GM12878 (cell line): ENCODE measurements at regions of chr2 and their contacts with region 1.

Region 1: DNA sequence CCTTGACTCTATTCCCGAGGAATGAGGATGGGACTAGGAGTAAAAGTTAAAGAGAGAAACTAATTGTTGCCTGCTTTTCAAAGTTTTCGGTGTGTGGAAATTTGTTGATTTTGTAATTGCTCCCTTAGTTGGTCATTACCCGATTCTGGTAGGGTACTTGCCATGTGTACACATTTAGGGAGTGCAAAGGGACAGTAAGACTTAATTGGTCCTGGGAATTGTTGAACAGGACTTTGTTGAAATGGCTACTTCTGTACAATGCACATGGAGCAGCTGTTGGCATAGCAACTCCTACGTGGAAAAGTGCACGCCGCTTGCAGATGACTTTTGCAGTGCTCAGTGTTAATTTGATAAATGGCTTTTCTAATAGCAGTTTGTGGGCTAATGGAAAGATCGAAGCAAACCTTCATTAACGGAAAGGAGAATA is 22.9 kb downstream of the EPAS1 start:
- DNase-seq: no peak
- ATAC-seq: no peak
- H3K4me3 ChIP-seq: no peak overlapping the region
- H3K27ac ChIP-seq: no peak overlapping the region
- H3K4me1 ChIP-seq: no peaks in the 10 kb centered on the region
- H3K27me3 ChIP-seq: no peaks in the 10 kb centered on the region; a peak in 1 of 4 replicates
- CTCF ChIP-seq: no peak
- EP300 ChIP-seq: no peak
- POLR2A ChIP-seq: no peak
- RAD21 ChIP-seq: no peak

Region 2: DNA sequence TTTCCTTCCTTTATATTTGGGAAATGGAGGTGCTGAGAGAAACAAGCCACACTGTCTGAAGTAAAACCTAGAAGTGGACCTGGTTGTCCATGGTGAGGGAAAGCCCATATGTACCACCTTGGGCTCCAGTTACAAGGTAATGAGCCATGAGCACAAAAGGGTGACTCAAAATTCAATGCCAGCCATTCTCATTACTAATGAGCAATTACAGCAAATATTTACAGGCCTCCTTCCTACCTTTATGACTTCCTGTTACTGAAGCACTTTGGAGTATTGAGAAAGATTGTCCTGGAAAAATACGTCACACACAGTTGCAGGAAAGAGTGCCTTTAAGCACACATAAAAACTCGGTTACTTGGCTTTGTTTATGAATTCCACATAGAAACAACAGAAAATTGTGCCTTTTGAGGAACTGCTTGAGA is 13.8 kb before region 1 on chr2:
- CTCF ChIA-PET with region 1: interaction called, 14 read pairs
- POLR2A ChIA-PET with region 1: interaction called, 4 read pairs
- RAD21 ChIA-PET with region 1: interaction called, 6 read pairs
- SMC1A ChIA-PET with region 1: interaction called, 18 read pairs
- in situ Hi-C with region 1: no loop called
- intact Hi-C with region 1: no loop called
- DNase-seq: no peak
- ATAC-seq: peak; percentile 67
- H3K4me3 ChIP-seq: no peak overlapping the region
- H3K27ac ChIP-seq: no peak overlapping the region
- H3K4me1 ChIP-seq: no peaks in the 10 kb centered on the region
- H3K27me3 ChIP-seq: peaks cover 0 to 7% of the 10 kb centered on the region in 2 experiments; a peak in 1 of 4 replicates
- CTCF ChIP-seq: no peak
- EP300 ChIP-seq: no peak
- POLR2A ChIP-seq: no peak
- RAD21 ChIP-seq: no peak

Region 3: GRCh38 chr2:46339667-46340459 is 19.7 kb after region 1 on chr2:
- CTCF ChIA-PET with region 1: no interaction called
- POLR2A ChIA-PET with region 1: interaction called, 4 read pairs
- RAD21 ChIA-PET with region 1: interaction called, 6 read pairs
- SMC1A ChIA-PET with region 1: interaction called, 12 read pairs
- in situ Hi-C with region 1: no loop called
- intact Hi-C with region 1: no loop called
- DNase-seq: no peak
- ATAC-seq: no peak
- H3K4me3 ChIP-seq: no peak overlapping the region
- H3K27ac ChIP-seq: no peak overlapping the region
- H3K4me1 ChIP-seq: no peaks in the 10 kb centered on the region
- H3K27me3 ChIP-seq: peaks cover 0 to 3% of the 10 kb centered on the region in 2 experiments; a peak in 2 of 4 replicates
- CTCF ChIP-seq: no peak
- EP300 ChIP-seq: no peak
- POLR2A ChIP-seq: no peak
- RAD21 ChIP-seq: no peak